Mammary epithelial cell (primary cell): ENCODE measurements at regions of chr18 and their contacts with region 1.

Region 1: GRCh38 chr18:23586249-23587196 is at the start of gene NPC1:
- DNase-seq: peak; percentile 97
- H3K4me3 ChIP-seq: peak within 1 kb of the TSS; percentile 90 to 93 (median 91)
- H3K27ac ChIP-seq: peak within 1 kb of the TSS; percentile 99
- H3K4me1 ChIP-seq: peaks cover 42% of the 10 kb centered on the region
- H3K27me3 ChIP-seq: no peaks in the 10 kb centered on the region
- CTCF ChIP-seq: peak; percentile 62 to 80
- total RNA-seq, gene NPC1: 83.4 to 104 TPM

Region 2: DNA sequence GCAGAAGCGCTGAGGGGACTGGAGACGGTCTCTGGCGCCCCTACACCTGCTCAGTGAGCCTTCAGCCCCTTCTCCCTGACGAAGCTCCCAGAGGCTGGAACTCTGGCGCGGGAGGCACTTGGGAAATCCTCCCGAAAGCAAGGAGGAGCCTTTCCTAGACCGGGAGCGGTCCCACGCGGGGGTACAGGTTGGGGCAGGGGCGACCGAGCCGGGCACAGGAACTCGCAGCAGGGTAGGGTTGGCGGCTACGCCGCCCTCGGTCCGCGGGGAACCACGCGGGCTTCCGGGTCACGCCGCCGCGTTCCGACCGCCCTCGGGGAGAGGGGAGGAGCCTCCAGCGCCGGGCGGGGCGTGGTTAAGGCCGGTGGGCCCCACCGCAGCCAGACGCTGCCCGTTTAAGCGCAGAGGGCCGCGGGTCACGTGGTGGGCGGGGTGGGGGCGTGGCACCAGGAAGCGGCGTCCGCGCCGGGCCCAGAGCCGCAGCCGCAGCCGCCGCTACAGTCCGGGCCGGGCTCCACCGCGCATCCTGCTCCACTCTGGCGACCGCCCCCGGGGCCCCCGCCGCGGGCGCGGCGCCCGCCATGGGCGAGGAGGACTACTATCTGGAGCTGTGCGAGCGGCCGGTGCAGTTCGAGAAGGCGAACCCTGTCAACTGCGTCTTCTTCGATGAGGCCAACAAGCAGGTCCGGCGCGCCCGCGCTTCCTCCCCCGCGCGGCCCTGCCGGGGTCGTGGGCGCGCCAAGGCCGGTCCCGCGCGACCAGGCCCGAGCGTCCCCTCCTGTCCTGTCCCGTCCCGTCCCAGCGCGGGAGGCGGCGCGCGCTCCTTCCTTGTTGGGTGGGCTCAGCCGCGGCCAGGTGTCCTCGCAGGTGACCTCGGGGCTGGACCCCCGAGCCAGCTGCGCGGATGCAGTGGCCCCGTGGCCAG is 83.2 kb before region 1 on chr18 and contains the start of gene RMC1:
- CTCF ChIA-PET with region 1: no interaction called
- dilution Hi-C with region 1: no loop called
- in situ Hi-C with region 1: no loop called
- intact Hi-C with region 1: loop called (anchors 2 kb)
- DNase-seq: peak; percentile 90
- H3K4me3 ChIP-seq: peak within 1 kb of the TSS; percentile 75 to 87 (median 83)
- H3K27ac ChIP-seq: peak within 1 kb of the TSS; percentile 67
- H3K4me1 ChIP-seq: peaks cover 15% of the 10 kb centered on the region
- H3K27me3 ChIP-seq: no peaks in the 10 kb centered on the region
- CTCF ChIP-seq: peak in 1 of 2 donors; percentile 21
- total RNA-seq, gene RMC1: 29.8 to 33.3 TPM

Region 3: GRCh38 chr18:23515911-23516546 is 70.5 kb before region 1 on chr18:
- CTCF ChIA-PET with region 1: no interaction called
- dilution Hi-C with region 1: loop called (anchors 5 kb)
- in situ Hi-C with region 1: no loop called
- intact Hi-C with region 1: loop called (anchors 1 kb)
- DNase-seq: peak; percentile 62
- H3K4me3 ChIP-seq: no peak overlapping the region
- H3K27ac ChIP-seq: no peak overlapping the region
- H3K4me1 ChIP-seq: peaks cover 15% of the 10 kb centered on the region
- H3K27me3 ChIP-seq: no peaks in the 10 kb centered on the region
- CTCF ChIP-seq: peak; percentile 90 to 97

Region 4: DNA sequence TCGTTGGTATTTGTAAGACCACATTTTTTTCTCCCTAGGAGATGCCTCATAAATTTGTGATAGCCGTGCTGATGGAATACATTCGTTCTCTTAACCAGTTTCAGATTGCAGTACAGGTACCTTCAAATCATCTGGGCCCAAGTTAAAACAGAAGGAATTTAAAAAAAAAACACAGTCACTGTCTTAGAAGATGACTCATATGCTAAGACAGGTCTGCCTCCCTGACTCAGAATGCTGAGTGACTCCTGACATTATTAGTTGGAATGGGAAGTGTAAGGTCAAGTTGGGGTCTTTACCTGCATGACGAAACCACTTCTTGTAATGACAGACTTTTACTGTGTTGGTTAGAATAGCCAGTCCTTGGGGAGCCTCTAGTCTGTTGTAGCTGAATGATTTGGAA is 56.9 kb before region 1 on chr18:
- CTCF ChIA-PET with region 1: no interaction called
- dilution Hi-C with region 1: loop called (anchors 5 kb)
- in situ Hi-C with region 1: no loop called
- intact Hi-C with region 1: loop called (anchors 2 kb)
- DNase-seq: peak; percentile 91
- H3K4me3 ChIP-seq: no peak overlapping the region
- H3K27ac ChIP-seq: no peak overlapping the region
- H3K4me1 ChIP-seq: peaks cover 24% of the 10 kb centered on the region
- H3K27me3 ChIP-seq: no peaks in the 10 kb centered on the region
- CTCF ChIP-seq: no peak

Region 5: DNA sequence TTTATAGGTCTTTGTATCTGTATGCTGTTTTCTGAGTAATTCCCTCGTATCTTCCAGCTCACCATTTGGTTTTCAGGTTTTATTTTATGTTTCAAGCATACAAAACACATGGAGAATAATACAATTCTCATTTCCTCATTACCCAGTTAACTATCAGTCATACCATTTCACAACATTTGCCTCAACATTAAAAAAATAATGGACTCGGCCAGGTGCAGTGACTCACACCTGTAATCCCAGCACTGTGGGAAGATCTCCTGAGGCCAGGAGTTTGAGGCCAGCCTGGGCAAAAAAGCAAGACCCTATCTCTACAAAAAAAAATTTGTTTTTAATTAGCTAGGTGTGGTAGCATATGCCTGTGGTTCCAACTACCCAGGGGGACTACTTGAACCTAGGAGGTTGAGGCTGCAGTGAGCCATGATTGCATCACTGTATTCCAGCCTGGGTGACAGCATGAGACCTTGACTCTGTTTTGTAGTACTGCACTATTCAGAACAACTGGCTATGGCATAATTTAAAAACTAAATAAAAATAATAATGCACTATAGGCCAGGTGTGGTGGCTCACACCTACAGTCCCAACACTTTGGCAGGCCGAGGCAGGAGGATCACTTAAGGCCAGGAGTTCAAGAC is 20.5 kb before region 1 on chr18:
- CTCF ChIA-PET with region 1: no interaction called
- dilution Hi-C with region 1: no loop called
- in situ Hi-C with region 1: no loop called
- intact Hi-C with region 1: loop called (anchors 1 kb)
- DNase-seq: peak; percentile 84
- H3K4me3 ChIP-seq: no peak overlapping the region
- H3K27ac ChIP-seq: peak overlapping the region; percentile 42
- H3K4me1 ChIP-seq: peaks cover 11% of the 10 kb centered on the region
- H3K27me3 ChIP-seq: no peaks in the 10 kb centered on the region
- CTCF ChIP-seq: no peak

Region 6: DNA sequence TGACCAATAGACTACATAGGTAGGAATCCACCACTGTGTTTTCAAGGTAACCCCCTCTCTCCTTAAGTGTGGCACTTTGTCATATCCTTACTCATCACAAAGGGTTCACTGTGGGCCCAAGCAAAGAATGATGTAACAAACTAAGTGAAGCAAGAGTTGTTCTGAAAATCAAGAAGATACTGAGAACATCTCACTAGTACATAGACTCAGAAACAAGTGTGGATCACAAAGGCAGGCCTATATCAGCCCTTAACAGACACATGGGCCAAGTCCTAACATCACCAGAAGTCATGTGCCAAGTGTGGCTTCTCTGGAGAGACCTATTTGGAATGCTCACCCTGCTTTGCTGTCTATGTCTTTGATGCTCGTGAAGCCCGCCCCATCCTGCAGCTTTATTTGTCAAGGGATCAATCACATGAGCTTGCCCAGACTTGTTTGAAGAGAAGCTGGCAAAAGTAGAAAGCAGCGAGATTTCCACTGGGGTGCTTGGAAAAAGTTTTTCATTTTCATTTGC is 296.8 kb after region 1 on chr18:
- CTCF ChIA-PET with region 1: no interaction called
- dilution Hi-C with region 1: no loop called
- in situ Hi-C with region 1: no loop called
- intact Hi-C with region 1: loop called (anchors 10 kb)
- DNase-seq: peak; percentile 85
- H3K4me3 ChIP-seq: no peak overlapping the region
- H3K27ac ChIP-seq: peak overlapping the region; percentile 73
- H3K4me1 ChIP-seq: peaks cover 77% of the 10 kb centered on the region
- H3K27me3 ChIP-seq: no peaks in the 10 kb centered on the region
- CTCF ChIP-seq: no peak